MCF 10A (cell line): ENCODE measurements at regions of chrX and their contacts with region 1.

Region 1: DNA sequence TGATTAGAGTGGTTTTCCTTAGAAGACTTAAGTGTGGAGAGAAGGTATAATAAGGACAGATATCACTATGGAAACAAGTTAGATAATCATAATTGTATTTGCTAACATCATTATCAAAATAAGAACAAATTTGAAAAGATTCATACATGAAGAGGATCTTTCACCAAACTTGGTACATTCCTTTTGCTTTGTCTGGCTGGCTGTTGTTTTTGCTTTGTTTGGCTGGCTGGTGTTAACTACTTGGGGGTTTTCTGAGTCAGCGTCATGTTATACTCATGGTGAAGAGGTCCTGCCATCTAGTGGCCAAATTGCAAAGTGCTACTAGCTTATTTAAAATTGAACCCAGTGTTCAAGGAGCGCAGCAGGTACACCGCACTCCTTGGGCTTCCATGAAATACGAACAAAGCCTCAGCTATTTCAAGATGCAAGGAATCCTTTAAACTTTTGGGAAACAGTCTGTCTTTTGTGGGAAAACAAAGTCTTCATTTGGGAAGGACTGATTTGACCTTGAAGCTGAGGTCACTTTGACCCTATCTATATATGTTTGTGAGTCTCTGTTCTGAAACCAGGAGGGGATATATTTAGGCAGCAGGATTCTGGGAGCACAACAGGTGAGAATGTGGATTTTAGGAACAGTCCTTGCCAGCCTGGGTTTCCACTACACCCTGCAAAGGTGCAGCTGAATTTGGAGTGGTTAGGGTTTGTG is 129.7 kb downstream of the PLS3 start:
- DNase-seq: peak; percentile 81
- H3K4me3 Mint-ChIP-seq: no peak overlapping the region
- H3K27ac Mint-ChIP-seq: no peak overlapping the region
- H3K4me1 Mint-ChIP-seq: no peaks in the 10 kb centered on the region
- H3K27me3 Mint-ChIP-seq: peaks cover 75% of the 10 kb centered on the region
- CTCF ChIP-seq: peak; percentile 74

Region 2: DNA sequence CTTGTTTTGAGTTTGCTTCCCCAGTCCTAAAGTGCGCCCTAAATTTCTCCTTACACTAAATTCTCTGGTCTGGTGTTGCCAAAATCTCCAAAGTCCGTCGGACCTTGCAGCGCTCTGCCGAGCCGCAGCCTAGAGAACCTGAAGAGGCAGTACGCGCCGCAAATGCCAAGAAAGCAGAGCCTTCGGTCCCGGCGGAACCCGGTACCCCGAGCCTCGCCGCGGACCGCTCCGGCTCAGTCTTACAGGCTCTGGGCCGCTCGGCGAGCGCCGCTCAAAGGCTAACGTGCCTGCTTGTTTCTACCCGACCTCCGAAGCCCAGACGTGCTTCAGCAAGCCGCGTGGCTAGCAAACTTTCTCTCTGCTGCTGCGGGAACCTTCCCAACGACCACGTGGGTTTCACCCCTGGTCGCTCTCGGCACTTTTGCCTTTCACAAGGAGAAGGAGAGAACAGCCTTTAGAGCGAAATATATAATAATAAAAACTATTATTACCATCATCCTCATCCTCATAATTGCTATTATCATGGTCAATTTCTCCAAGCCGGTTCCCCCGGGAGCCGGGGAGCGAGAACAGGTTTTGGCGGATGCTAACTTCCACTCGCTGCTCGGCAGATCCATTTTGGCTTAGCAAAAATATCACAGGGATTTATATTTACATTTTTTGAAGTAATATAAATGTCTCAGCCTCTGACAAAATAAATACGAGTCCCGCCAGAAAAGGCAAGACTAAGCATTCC is 1109.0 kb before region 1 on chrX:
- CTCF ChIA-PET with region 1: no interaction called
- POLR2A ChIA-PET with region 1: no interaction called
- intact Hi-C with region 1: no loop called
- DNase-seq: no peak
- H3K4me3 Mint-ChIP-seq: no peak overlapping the region
- H3K27ac Mint-ChIP-seq: no peak overlapping the region
- H3K4me1 Mint-ChIP-seq: no peaks in the 10 kb centered on the region
- H3K27me3 Mint-ChIP-seq: peaks cover 34% of the 10 kb centered on the region
- CTCF ChIP-seq: no peak

Region 3: GRCh38 chrX:115226929-115227328 is 463.7 kb before region 1 on chrX:
- CTCF ChIA-PET with region 1: interaction called, 3 read pairs
- POLR2A ChIA-PET with region 1: no interaction called
- intact Hi-C with region 1: loop called (anchors 5 kb)
- DNase-seq: peak; percentile 56
- H3K4me3 Mint-ChIP-seq: no peak overlapping the region
- H3K27ac Mint-ChIP-seq: no peak overlapping the region
- H3K4me1 Mint-ChIP-seq: no peaks in the 10 kb centered on the region
- H3K27me3 Mint-ChIP-seq: peaks cover 77% of the 10 kb centered on the region
- CTCF ChIP-seq: peak; percentile 43

Region 4: DNA sequence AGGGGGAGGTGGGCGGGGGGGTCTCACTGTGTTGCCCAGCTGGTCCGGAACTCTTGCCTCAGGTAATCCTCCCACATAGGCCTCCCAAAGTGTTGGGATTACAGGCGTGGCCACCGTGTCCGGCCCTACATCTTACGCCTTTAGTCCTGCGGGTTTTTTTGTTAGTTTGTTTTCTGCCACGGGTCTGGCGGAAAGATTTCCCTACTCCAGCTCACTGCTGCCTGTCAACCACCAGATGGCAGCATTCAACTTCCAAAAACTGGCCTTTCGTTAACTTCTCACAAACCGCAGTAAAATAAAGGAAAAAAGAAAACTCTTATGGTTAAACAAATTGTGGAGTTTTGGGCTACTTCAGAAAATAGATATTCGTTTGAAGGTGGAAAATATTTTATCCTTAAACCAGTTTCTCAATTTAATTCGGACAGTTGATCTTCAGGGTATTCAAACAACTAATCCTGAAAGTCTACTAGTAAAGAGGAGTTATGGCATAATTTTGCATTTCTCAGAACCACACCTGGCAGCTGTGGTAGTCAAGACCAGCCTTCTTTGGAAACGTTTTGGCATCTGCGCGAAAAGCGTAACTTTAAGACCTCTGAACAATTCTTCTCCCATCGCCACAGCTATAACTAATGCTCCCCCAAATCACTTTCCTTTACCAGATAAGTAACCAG is 360.0 kb before region 1 on chrX:
- CTCF ChIA-PET with region 1: interaction called, 22 read pairs
- POLR2A ChIA-PET with region 1: interaction called, 3 read pairs
- intact Hi-C with region 1: loop called (anchors 2 kb)
- DNase-seq: peak; percentile 70
- H3K4me3 Mint-ChIP-seq: no peak overlapping the region
- H3K27ac Mint-ChIP-seq: no peak overlapping the region
- H3K4me1 Mint-ChIP-seq: no peaks in the 10 kb centered on the region
- H3K27me3 Mint-ChIP-seq: peaks cover 55% of the 10 kb centered on the region
- CTCF ChIP-seq: peak; percentile 71

Region 5: DNA sequence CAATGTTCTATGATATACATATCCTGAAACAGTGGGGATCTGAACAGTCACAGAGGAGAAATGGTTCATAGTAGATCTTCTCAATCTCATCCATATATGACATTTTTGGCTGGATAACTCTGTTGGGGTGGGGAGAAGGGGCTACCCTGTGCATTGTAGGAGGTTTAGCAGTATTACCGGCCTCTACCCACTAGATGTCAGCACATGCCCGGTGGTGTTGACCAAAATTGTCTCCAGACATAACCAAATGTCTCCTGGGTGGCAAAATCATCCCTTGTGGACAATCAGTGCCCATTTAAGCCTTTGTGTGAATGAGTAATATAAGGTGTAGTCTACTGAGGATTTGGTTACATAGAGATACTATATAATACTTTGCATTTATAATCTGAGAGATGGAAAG is 39.7 kb before region 1 on chrX:
- CTCF ChIA-PET with region 1: interaction called, 21 read pairs
- POLR2A ChIA-PET with region 1: no interaction called
- intact Hi-C with region 1: loop called (anchors 1 kb)
- DNase-seq: peak; percentile 67
- H3K4me3 Mint-ChIP-seq: no peak overlapping the region
- H3K27ac Mint-ChIP-seq: peak overlapping the region; percentile 31
- H3K4me1 Mint-ChIP-seq: no peaks in the 10 kb centered on the region
- H3K27me3 Mint-ChIP-seq: peaks cover 65% of the 10 kb centered on the region
- CTCF ChIP-seq: peak; percentile 49

Region 6: DNA sequence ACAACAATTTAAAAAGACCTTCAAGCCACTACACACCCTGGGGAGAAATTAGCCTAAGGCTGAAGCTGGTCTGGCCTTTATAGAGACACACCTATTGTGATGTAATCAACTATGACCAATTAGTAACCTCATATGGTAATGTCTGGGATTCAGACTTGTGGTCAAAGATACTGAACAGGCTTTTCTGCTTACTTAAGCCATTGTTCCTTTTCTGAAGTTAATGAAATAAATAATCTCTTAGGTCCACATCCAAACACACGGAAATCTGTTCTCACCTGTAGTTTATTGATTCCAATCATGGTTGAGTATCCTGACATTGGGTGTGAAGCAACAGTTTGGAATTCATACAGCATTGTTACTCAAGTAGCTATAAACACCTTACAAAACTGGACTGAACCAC is 22.8 kb after region 1 on chrX:
- CTCF ChIA-PET with region 1: interaction called, 11 read pairs
- POLR2A ChIA-PET with region 1: no interaction called
- intact Hi-C with region 1: no loop called
- DNase-seq: peak; percentile 16
- H3K4me3 Mint-ChIP-seq: no peak overlapping the region
- H3K27ac Mint-ChIP-seq: no peak overlapping the region
- H3K4me1 Mint-ChIP-seq: no peaks in the 10 kb centered on the region
- H3K27me3 Mint-ChIP-seq: peaks cover 37% of the 10 kb centered on the region
- CTCF ChIP-seq: no peak